ENCODE measurements at regions of chr17 and their contacts with region 1.

Region 1: DNA sequence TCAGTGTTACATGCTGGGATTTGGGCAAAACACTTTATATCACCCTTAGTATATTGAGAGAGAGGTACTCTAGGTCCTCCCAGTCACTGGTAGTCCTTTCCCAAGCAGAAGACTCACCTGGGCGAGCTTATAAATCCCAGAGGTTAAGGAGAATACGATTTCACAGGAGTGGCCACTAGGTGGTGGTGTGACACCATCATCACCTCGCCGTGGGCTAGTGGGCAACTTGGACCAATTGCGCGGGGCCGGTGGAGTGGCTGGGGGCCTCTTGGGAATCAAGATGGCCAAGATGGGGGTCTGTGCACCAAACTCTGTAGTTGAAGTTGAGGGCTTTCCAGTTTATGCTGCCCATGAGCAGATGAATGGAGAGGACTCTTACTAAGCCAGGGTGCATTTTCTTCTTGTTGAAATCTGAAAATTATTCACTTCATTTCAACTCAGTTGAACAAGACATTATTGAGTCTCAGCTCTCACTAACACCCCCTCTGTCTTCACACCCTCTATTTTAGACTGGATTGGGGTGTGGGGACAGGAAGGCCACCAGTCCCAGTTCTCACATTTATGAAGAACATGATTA is 38.2 kb upstream of the PIRT start:
- DNase-seq: peak; percentile 64
- H3K4me3 Mint-ChIP-seq: no peak overlapping the region
- H3K27ac Mint-ChIP-seq: no peak overlapping the region
- H3K4me1 Mint-ChIP-seq: no peaks in the 10 kb centered on the region
- H3K27me3 Mint-ChIP-seq: no peaks in the 10 kb centered on the region

Region 2: DNA sequence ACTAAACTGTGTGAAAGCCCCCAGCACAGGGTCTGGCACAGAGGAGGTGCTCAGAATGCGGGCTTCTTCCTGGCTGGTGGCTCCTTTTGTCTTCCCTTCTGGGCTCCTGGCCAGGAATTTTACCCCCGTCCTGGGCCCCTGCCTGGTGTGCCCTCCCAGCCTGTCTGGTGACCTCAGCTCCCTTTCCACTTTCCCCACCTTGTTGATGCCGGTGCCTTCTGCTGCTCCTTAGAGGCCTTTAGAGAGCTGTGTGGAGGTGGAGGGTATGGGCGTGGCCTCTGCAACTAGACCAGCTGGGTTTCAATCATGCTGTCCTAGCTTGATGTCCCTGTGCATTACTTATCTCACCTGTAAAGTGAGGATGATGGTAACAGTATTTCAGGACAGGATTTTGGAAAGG is 55.0 kb before region 1 on chr17:
- intact Hi-C with region 1: no loop called
- DNase-seq: no peak
- H3K4me3 Mint-ChIP-seq: no peak overlapping the region
- H3K27ac Mint-ChIP-seq: no peak overlapping the region
- H3K4me1 Mint-ChIP-seq: no peaks in the 10 kb centered on the region
- H3K27me3 Mint-ChIP-seq: no peaks in the 10 kb centered on the region

Region 3: GRCh38 chr17:10956821-10957220 is 80.8 kb after region 1 on chr17:
- intact Hi-C with region 1: no loop called
- DNase-seq: no peak
- H3K4me3 Mint-ChIP-seq: no peak overlapping the region
- H3K27ac Mint-ChIP-seq: no peak overlapping the region
- H3K4me1 Mint-ChIP-seq: no peaks in the 10 kb centered on the region
- H3K27me3 Mint-ChIP-seq: no peaks in the 10 kb centered on the region

Region 4: GRCh38 chr17:11144358-11145233 is 268.5 kb after region 1 on chr17:
- intact Hi-C with region 1: loop called (anchors 10 kb)
- DNase-seq: no peak
- H3K4me3 Mint-ChIP-seq: no peak overlapping the region
- H3K27ac Mint-ChIP-seq: no peak overlapping the region
- H3K4me1 Mint-ChIP-seq: no peaks in the 10 kb centered on the region
- H3K27me3 Mint-ChIP-seq: no peaks in the 10 kb centered on the region

Region 5: DNA sequence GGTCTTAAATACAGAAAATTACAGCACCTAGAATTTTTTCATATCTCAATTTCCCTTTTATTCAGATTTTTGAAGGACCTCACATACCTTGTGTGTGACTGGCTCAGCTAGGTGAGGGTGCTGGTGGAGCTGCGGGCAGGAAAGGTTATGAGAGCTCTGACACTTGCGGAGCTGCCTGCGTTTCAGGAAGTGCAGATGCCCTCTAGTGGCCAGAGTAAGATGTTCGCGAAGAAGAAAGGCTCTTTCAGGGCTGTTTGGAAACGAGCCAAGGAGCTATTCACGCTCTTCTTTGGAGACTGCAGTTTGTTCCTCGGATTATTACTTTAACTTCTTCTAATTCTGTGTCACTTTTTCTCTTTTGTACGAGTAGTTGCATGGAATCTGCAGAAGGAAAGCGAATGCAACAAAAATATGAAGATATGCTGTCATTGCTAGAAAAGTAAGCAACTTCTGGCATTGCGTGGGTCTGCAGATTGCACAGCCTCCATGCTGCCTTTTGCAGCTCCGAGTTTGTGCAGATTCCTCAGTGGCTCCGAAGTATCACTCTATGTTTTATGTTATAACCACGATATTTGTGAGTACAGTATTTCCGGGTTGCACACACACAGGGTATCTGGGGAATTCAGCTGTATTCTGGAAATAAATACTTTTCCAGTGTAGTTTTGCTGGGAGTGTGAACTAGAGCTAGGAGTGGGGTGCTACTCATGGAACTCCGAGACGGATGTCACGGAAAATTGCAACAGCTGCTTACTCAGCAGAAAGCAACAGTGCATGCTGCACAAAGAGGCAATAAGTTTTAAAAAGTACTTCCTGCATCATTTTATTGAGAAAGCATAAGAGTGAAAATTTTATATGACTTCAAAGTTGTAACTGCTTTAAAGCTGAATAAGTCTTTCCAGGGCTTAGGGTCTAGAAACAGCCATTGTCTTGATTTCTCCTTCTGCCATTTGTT is 768.5 kb after region 1 on chr17:
- intact Hi-C with region 1: loop called (anchors 5 kb)
- DNase-seq: peak; percentile 78
- H3K4me3 Mint-ChIP-seq: no peak overlapping the region
- H3K27ac Mint-ChIP-seq: no peak overlapping the region
- H3K4me1 Mint-ChIP-seq: peaks cover 2% of the 10 kb centered on the region
- H3K27me3 Mint-ChIP-seq: no peaks in the 10 kb centered on the region